Kidney (tissue), 22 donors: ENCODE measurements at regions of chr1 and their contacts with region 1.

Region 1: GRCh38 chr1:201895913-201896807 is 7.5 kb downstream of the SHISA4 start:
- DNase-seq: peak; percentile 91 to 95 (median 93)
- H3K4me3 ChIP-seq: peak overlapping the region in 1 of 3 donors; percentile 43
- H3K27ac ChIP-seq: no peak overlapping the region
- H3K4me1 ChIP-seq: peaks cover 0 to 5% (median 0%) of the 10 kb centered on the region in 3 donors
- H3K27me3 ChIP-seq: no peaks in the 10 kb centered on the region
- CTCF ChIP-seq: peak; percentile 91

Region 2: GRCh38 chr1:201955009-201955728 is 59.0 kb after region 1 on chr1 and contains the start of gene TIMM17A:
- intact Hi-C with region 1: loop called (anchors 5 kb)
- DNase-seq: peak; percentile 98 to 99 (median 99)
- H3K4me3 ChIP-seq: peak within 1 kb of the TSS; percentile 94 to 98 (median 94)
- H3K27ac ChIP-seq: peak within 1 kb of the TSS; percentile 75 to 76
- H3K4me1 ChIP-seq: no peaks in the 10 kb centered on the region
- H3K27me3 ChIP-seq: no peaks in the 10 kb centered on the region
- CTCF ChIP-seq: no peak
- total RNA-seq, gene TIMM17A: 40.8 TPM